Naive thymus-derived CD4-positive, alpha-beta T cell (primary cell): ENCODE measurements at regions of chr1 and their contacts with region 1.

Region 1: GRCh38 chr1:183471743-183472487 is 384 bp upstream of the SMG7 start:
- DNase-seq: peak; percentile 90 to 99 (median 96)
- ATAC-seq: peak; percentile 82
- H3K4me3 ChIP-seq: peak overlapping the region; percentile 74
- H3K4me3 Mint-ChIP-seq: peak overlapping the region; percentile 94 to 100 (median 98)
- H3K27ac ChIP-seq: peak overlapping the region; percentile 90
- H3K27ac Mint-ChIP-seq: peak overlapping the region in 8 of 9 donors; percentile 97 to 100 (median 99)
- H3K4me1 ChIP-seq: peaks cover 17 to 34% of the 10 kb centered on the region in 2 donors
- H3K4me1 Mint-ChIP-seq: peaks cover 3 to 32% (median 14%) of the 10 kb centered on the region in 7 donors
- H3K27me3 ChIP-seq: no peaks in the 10 kb centered on the region
- H3K27me3 Mint-ChIP-seq: peaks cover 0 to 7% (median 0%) of the 10 kb centered on the region in 5 donors

Region 2: DNA sequence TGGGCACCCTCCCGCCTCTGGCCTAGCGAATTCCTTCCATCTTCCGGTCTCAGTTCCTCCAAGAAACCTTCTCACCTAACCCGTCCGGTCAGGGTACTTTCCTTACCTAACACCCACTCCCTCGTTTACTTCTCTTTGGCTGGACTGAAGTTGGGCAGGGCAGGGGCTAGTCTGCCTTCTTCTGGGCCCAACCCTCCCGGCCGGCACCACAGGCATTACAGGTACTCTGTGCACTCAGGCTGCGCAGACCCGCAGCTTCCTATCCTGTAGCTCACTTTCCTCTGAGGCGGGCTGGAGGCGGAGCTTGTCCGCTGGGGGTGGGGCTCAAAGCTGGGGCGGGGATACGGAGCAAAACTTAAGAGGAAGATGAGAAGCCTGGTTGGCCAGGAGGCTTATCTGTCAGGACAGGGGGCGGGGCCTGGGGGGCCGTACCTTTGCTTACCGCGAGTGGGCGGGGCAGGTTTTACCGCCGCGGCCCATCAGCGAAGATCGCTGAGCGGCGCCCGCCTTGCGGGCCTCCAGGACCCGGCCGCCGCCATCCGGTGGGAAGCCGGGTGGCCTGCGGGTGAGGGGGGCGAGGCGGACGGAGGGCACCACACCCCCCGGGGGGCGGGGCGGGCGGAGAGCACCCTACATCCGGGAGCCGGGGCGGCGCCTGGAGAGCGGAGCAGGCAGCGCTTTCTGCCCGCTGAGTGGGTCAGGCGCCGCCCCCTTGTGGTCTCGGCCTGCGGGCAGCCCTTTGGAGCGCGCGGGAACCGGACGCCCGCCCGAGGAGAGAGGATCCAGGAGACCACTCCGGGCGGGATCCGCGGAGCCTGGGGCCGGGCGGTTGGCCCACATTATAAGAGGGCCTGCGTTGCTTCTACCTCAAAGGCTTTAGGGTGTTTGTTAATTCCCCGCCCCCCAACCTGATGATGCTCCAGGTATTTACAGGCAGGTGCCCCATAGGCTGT is 1442.3 kb before region 1 on chr1:
- CTCF ChIA-PET with region 1: no interaction called
- POLR2A ChIA-PET with region 1: no interaction called
- intact Hi-C with region 1: loop called in 1 of 2 experiments (anchors 2 kb)
- DNase-seq: peak; percentile 95 to 98 (median 98)
- ATAC-seq: peak; percentile 97
- H3K4me3 ChIP-seq: peak overlapping the region; percentile 72
- H3K4me3 Mint-ChIP-seq: peak overlapping the region; percentile 90 to 100 (median 96)
- H3K27ac ChIP-seq: peak overlapping the region; percentile 87
- H3K27ac Mint-ChIP-seq: peak overlapping the region; percentile 94 to 100 (median 99)
- H3K4me1 ChIP-seq: peaks cover 9 to 14% of the 10 kb centered on the region in 2 donors
- H3K4me1 Mint-ChIP-seq: peaks cover 12 to 21% (median 18%) of the 10 kb centered on the region in 7 donors
- H3K27me3 ChIP-seq: no peaks in the 10 kb centered on the region
- H3K27me3 Mint-ChIP-seq: peaks cover 0 to 6% (median 0%) of the 10 kb centered on the region in 5 donors

Region 3: GRCh38 chr1:182614796-182615454 is 857.0 kb before region 1 on chr1:
- CTCF ChIA-PET with region 1: no interaction called
- POLR2A ChIA-PET with region 1: no interaction called
- intact Hi-C with region 1: loop called in 1 of 2 experiments (anchors 5 kb)
- DNase-seq: peak in 7 of 9 donors; percentile 26 to 68 (median 35)
- ATAC-seq: peak; percentile 14
- H3K4me3 ChIP-seq: peak overlapping the region; percentile 54
- H3K4me3 Mint-ChIP-seq: peak overlapping the region; percentile 74 to 87 (median 84)
- H3K27ac ChIP-seq: peak overlapping the region; percentile 15
- H3K27ac Mint-ChIP-seq: peak overlapping the region in 8 of 9 donors; percentile 74 to 95 (median 92)
- H3K4me1 ChIP-seq: peaks cover 15 to 32% of the 10 kb centered on the region in 2 donors
- H3K4me1 Mint-ChIP-seq: peaks cover 28 to 68% (median 32%) of the 10 kb centered on the region in 7 donors
- H3K27me3 ChIP-seq: no peaks in the 10 kb centered on the region
- H3K27me3 Mint-ChIP-seq: peaks cover 0 to 75% (median 30%) of the 10 kb centered on the region in 5 donors

Region 4: GRCh38 chr1:183498342-183498991 is 26.6 kb after region 1 on chr1:
- CTCF ChIA-PET with region 1: no interaction called
- POLR2A ChIA-PET with region 1: interaction called, 3 read pairs
- intact Hi-C with region 1: loop called (anchors 1 to 2 kb)
- DNase-seq: peak in 6 of 9 donors; percentile 22 to 57 (median 40)
- ATAC-seq: peak; percentile 58
- H3K4me3 ChIP-seq: no peak overlapping the region
- H3K4me3 Mint-ChIP-seq: peak overlapping the region; percentile 34 to 76 (median 64)
- H3K27ac ChIP-seq: no peak overlapping the region
- H3K27ac Mint-ChIP-seq: peak overlapping the region; percentile 48 to 89 (median 71)
- H3K4me1 ChIP-seq: peaks cover 23 to 38% of the 10 kb centered on the region in 2 donors
- H3K4me1 Mint-ChIP-seq: peaks cover 40 to 96% (median 79%) of the 10 kb centered on the region in 7 donors
- H3K27me3 ChIP-seq: no peaks in the 10 kb centered on the region
- H3K27me3 Mint-ChIP-seq: no peaks in the 10 kb centered on the region

Region 5: DNA sequence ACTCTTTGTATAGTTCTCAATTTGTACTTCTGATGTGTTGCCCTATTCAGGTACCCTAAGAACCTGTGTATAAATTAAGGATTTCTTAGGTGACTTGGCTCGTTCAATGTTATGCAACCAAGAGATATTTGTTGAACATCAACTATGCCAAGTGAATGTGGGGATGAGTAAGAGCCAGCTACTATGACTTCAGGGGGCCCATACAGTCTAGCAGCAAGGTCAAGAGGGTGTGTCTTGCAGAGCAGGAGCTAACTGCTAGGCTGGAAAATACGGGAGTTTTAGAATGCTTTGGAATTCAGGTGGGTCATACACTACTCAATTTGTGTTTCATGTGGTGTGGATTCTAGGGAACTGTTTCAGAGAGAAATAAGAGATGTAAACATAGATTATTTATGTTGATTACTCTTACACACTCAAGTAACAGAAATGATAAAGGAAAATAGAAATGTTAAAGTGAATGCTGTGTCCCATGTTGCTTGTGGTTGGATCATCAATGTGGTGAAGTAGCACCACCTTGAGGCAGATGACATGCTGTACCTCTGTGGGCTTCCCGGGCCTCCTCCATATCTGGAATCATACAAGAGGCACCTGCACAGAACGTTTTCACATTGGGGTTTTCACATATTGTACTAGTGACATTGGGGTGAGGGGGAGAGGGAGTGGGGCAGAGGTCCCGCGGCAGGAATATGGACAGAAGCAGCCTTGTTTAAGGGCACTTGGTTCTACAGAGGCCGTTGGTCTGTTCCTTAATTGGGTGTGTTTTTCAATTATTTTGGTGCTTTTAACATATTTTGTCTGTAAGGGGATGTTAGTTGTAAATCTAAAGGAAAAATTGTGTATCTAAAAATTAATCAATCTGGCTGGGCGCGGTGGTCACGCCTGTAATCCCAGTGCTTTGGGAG is 151.2 kb after region 1 on chr1:
- CTCF ChIA-PET with region 1: interaction called, 3 read pairs
- POLR2A ChIA-PET with region 1: no interaction called
- intact Hi-C with region 1: loop called (anchors 1 kb)
- DNase-seq: peak in 7 of 9 donors; percentile 38 to 67 (median 43)
- ATAC-seq: peak; percentile 96
- H3K4me3 ChIP-seq: no peak overlapping the region
- H3K4me3 Mint-ChIP-seq: no peak overlapping the region
- H3K27ac ChIP-seq: peak overlapping the region; percentile 37
- H3K27ac Mint-ChIP-seq: peak overlapping the region; percentile 1 to 76 (median 58)
- H3K4me1 ChIP-seq: peaks cover 0 to 5% of the 10 kb centered on the region in 2 donors
- H3K4me1 Mint-ChIP-seq: peaks cover 10 to 48% (median 20%) of the 10 kb centered on the region in 7 donors
- H3K27me3 ChIP-seq: no peaks in the 10 kb centered on the region
- H3K27me3 Mint-ChIP-seq: no peaks in the 10 kb centered on the region

Region 6: GRCh38 chr1:183915625-183916510 is 444.0 kb after region 1 on chr1:
- CTCF ChIA-PET with region 1: interaction called, 3 read pairs
- POLR2A ChIA-PET with region 1: no interaction called
- intact Hi-C with region 1: loop called (anchors 1 to 5 kb)
- DNase-seq: peak; percentile 16 to 80 (median 71)
- ATAC-seq: peak; percentile 96
- H3K4me3 ChIP-seq: no peak overlapping the region
- H3K4me3 Mint-ChIP-seq: peak overlapping the region in 8 of 10 donors; percentile 19 to 48 (median 38)
- H3K27ac ChIP-seq: no peak overlapping the region
- H3K27ac Mint-ChIP-seq: peak overlapping the region in 4 of 9 donors; percentile 7 to 70 (median 45)
- H3K4me1 ChIP-seq: peaks cover 0 to 5% of the 10 kb centered on the region in 2 donors
- H3K4me1 Mint-ChIP-seq: peaks cover 6 to 17% (median 8%) of the 10 kb centered on the region in 7 donors
- H3K27me3 ChIP-seq: no peaks in the 10 kb centered on the region
- H3K27me3 Mint-ChIP-seq: no peaks in the 10 kb centered on the region

Region 7: DNA sequence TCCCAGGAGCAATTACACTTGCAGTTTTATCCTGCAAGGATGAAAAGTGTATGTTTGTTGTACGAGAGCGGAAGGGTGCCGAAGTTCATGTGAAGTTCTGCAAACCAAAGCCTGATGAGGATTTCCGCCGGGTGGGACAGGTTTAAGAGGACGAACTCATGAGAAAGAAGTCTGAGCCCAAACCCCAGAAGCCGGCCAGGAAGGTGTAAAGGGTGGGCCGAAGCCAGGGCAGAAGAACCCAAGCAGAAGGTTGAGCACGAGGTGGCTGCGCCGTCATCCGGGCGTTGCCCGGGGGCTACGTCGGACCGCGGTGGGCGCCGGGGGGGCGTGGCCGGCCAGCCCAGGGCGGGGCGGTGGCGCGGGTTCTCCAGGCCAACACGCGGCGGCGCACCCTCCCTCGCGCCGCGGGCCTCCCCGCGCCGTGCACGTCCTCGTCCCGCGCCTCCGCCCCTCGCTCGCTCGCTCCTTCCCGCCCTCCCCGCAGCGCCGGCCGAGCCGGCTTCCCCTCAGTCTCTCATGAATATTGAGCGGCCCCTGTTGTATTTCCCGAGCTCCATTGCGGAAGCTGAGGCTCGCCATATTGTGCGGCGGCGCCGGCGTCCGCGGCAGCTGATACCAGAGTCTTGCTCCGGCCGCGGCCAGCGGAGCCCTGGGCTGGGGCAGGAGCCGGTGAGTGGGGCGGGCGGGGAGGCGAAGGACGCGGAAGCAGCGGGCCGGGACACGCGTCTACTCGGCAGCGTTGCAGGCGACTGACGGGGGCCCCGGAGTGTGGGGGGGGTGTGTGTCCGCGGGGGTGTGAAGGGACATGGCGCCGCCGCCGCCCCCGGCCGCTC is 1573.3 kb after region 1 on chr1 and contains the start of gene RNF2:
- CTCF ChIA-PET with region 1: no interaction called
- POLR2A ChIA-PET with region 1: no interaction called
- intact Hi-C with region 1: loop called (anchors 5 kb)
- DNase-seq: peak; percentile 64 to 80 (median 77)
- ATAC-seq: peak; percentile 95
- H3K4me3 ChIP-seq: peak within 1 kb of the TSS; percentile 74
- H3K4me3 Mint-ChIP-seq: peak within 1 kb of the TSS; percentile 87 to 96 (median 92)
- H3K27ac ChIP-seq: peak within 1 kb of the TSS; percentile 75
- H3K27ac Mint-ChIP-seq: peak within 1 kb of the TSS; percentile 69 to 96 (median 88)
- H3K4me1 ChIP-seq: peaks cover 11 to 15% of the 10 kb centered on the region in 2 donors
- H3K4me1 Mint-ChIP-seq: peaks cover 27 to 56% (median 45%) of the 10 kb centered on the region in 7 donors
- H3K27me3 ChIP-seq: no peaks in the 10 kb centered on the region
- H3K27me3 Mint-ChIP-seq: peaks cover 0 to 26% (median 0%) of the 10 kb centered on the region in 5 donors
- total RNA-seq, gene RNF2: 14.9 to 27.7 (median 19.6) TPM